Naive thymus-derived CD4-positive, alpha-beta T cell (primary cell): ENCODE measurements at regions of chr3 and their contacts with region 1.

Region 1: DNA sequence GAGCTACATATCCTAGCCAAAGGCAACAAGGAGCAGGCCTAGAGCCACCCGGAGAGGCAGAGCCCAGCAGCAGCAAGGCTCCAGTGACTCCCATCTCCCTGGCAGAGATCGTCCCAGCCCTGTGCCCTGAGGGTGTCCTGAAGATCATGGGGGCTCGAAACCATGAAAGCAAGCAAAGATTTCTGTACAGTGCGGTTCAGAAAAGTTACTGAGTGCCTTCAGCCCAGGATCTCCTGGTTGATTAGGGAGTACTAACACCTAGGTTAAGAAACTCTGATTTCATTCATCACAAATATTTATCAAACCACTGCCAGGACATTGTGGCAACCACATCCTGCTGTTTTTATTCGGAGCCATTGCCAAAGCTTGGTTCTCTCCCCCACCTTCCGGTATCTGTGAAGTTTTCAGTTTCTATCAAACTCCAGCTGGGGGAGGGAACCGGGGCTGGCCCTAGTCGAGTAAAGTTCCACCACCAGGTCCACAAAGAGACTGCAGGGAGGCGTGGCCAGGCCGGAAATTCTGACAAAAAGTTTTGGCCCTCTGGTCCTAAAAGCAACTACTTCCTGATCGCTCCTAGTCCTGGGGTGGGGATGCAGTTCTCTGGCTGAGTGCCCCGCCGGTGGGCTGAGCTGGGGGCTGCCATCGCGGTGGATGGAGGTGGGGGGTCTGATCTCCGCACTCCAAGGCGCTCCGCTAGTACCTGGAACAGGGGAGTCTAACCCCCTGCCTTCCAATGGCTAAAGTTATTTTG is 1.2 kb downstream of the RAB43 start:
- DNase-seq: peak; percentile 63 to 96 (median 93)
- ATAC-seq: peak; percentile 72
- H3K4me3 ChIP-seq: peak overlapping the region; percentile 95
- H3K4me3 Mint-ChIP-seq: peak overlapping the region; percentile 86 to 99 (median 98)
- H3K27ac ChIP-seq: peak overlapping the region; percentile 83
- H3K27ac Mint-ChIP-seq: peak overlapping the region; percentile 91 to 100 (median 97)
- H3K4me1 ChIP-seq: peaks cover 32 to 33% of the 10 kb centered on the region in 2 donors
- H3K4me1 Mint-ChIP-seq: peaks cover 26 to 58% (median 42%) of the 10 kb centered on the region in 7 donors
- H3K27me3 ChIP-seq: no peaks in the 10 kb centered on the region
- H3K27me3 Mint-ChIP-seq: no peaks in the 10 kb centered on the region

Region 2: DNA sequence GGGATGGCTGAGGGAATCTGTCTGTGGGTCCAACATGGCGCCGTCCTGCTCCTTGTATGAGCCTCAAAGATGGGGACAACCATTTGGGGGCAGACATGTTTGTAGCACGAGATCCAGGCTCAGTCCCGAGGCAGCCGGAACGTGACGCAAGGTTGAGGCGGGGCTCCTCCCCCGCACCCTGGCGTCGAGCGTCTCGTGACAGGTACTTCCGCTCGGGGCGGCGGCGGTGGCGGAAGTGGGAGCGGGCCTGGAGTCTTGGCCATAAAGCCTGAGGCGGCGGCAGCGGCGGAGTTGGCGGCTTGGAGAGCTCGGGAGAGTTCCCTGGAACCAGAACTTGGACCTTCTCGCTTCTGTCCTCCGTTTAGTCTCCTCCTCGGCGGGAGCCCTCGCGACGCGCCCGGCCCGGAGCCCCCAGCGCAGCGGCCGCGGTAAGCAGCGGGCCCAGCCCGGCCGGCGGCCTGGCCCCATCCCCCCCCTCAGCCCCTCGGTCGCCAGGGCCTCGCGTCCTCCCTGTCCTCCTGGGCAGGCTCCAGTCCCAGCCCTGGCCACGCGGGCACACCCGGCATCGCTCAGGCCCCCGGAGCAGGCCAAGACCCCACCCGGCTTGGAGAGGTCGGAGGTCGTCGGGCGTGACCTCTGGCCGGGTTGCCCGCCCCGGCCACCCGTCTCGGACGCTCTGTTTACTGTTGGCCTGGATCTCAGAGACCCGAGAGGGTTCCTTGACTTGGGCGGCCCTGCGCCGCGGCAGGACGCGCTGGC is 394.3 kb before region 1 on chr3 and contains the start of gene RAB7A:
- CTCF ChIA-PET with region 1: no interaction called
- POLR2A ChIA-PET with region 1: no interaction called
- intact Hi-C with region 1: loop called in 1 of 2 experiments (anchors 10 kb)
- DNase-seq: peak; percentile 92 to 97 (median 97)
- ATAC-seq: peak; percentile 98
- H3K4me3 ChIP-seq: peak within 1 kb of the TSS; percentile 57
- H3K4me3 Mint-ChIP-seq: peak within 1 kb of the TSS; percentile 89 to 98 (median 96)
- H3K27ac ChIP-seq: peak within 1 kb of the TSS; percentile 100
- H3K27ac Mint-ChIP-seq: peak within 1 kb of the TSS; percentile 92 to 98 (median 95)
- H3K4me1 ChIP-seq: peaks cover 32 to 38% of the 10 kb centered on the region in 2 donors
- H3K4me1 Mint-ChIP-seq: peaks cover 49 to 64% (median 60%) of the 10 kb centered on the region in 7 donors
- H3K27me3 ChIP-seq: no peaks in the 10 kb centered on the region
- H3K27me3 Mint-ChIP-seq: peaks cover 0 to 3% (median 0%) of the 10 kb centered on the region in 5 donors
- total RNA-seq, gene RAB7A: 124 to 249 (median 172) TPM

Region 3: GRCh38 chr3:128993461-128994173 is 126.8 kb before region 1 on chr3 and contains the start of gene CFAP92:
- CTCF ChIA-PET with region 1: no interaction called
- POLR2A ChIA-PET with region 1: interaction called, 24 read pairs
- intact Hi-C with region 1: loop called in 1 of 2 experiments (anchors 1 kb)
- DNase-seq: peak; percentile 84 to 90 (median 89)
- ATAC-seq: peak; percentile 99
- H3K4me3 ChIP-seq: peak within 1 kb of the TSS; percentile 57
- H3K4me3 Mint-ChIP-seq: peak within 1 kb of the TSS; percentile 71 to 87 (median 82)
- H3K27ac ChIP-seq: peak within 1 kb of the TSS; percentile 61
- H3K27ac Mint-ChIP-seq: peak within 1 kb of the TSS; percentile 56 to 91 (median 73)
- H3K4me1 ChIP-seq: peaks cover 6 to 28% of the 10 kb centered on the region in 2 donors
- H3K4me1 Mint-ChIP-seq: peaks cover 15 to 45% (median 34%) of the 10 kb centered on the region in 7 donors
- H3K27me3 ChIP-seq: no peaks in the 10 kb centered on the region
- H3K27me3 Mint-ChIP-seq: peaks cover 0 to 3% (median 0%) of the 10 kb centered on the region in 5 donors
- total RNA-seq, gene CFAP92: 0.10 to 1.4 (median 0.46) TPM

Region 4: GRCh38 chr3:129068291-129068886 is 52.0 kb before region 1 on chr3:
- CTCF ChIA-PET with region 1: interaction called, 3 read pairs
- POLR2A ChIA-PET with region 1: interaction called, 42 read pairs
- intact Hi-C with region 1: loop called (anchors 1 to 2 kb)
- DNase-seq: no peak
- ATAC-seq: peak; percentile 32
- H3K4me3 ChIP-seq: peak overlapping the region; percentile 30
- H3K4me3 Mint-ChIP-seq: peak overlapping the region; percentile 60 to 85 (median 76)
- H3K27ac ChIP-seq: peak overlapping the region; percentile 50
- H3K27ac Mint-ChIP-seq: peak overlapping the region in 3 of 9 donors; percentile 19 to 75 (median 64)
- H3K4me1 ChIP-seq: no peaks in the 10 kb centered on the region
- H3K4me1 Mint-ChIP-seq: peaks cover 2 to 28% (median 15%) of the 10 kb centered on the region in 7 donors
- H3K27me3 ChIP-seq: no peaks in the 10 kb centered on the region
- H3K27me3 Mint-ChIP-seq: peaks cover 0 to 5% (median 0%) of the 10 kb centered on the region in 5 donors

Region 5: GRCh38 chr3:129132097-129132866 is 11.9 kb after region 1 on chr3:
- CTCF ChIA-PET with region 1: interaction called, 3 read pairs
- POLR2A ChIA-PET with region 1: interaction called, 89 read pairs
- intact Hi-C with region 1: loop called in 1 of 2 experiments (anchors 2 kb)
- DNase-seq: no peak
- ATAC-seq: peak; percentile 38
- H3K4me3 ChIP-seq: no peak overlapping the region
- H3K4me3 Mint-ChIP-seq: peak overlapping the region in 5 of 10 donors; percentile 7 to 50 (median 34)
- H3K27ac ChIP-seq: peak overlapping the region; percentile 3
- H3K27ac Mint-ChIP-seq: peak overlapping the region; percentile 10 to 89 (median 79)
- H3K4me1 ChIP-seq: peaks cover 0 to 7% of the 10 kb centered on the region in 2 donors
- H3K4me1 Mint-ChIP-seq: peaks cover 3 to 32% (median 17%) of the 10 kb centered on the region in 7 donors
- H3K27me3 ChIP-seq: no peaks in the 10 kb centered on the region
- H3K27me3 Mint-ChIP-seq: no peaks in the 10 kb centered on the region

Region 6: GRCh38 chr3:129278439-129278970 is 158.1 kb after region 1 on chr3 and contains the start of gene HMCES:
- CTCF ChIA-PET with region 1: interaction called, 3 read pairs
- POLR2A ChIA-PET with region 1: interaction called, 7 read pairs
- intact Hi-C with region 1: loop called (anchors 1 kb)
- DNase-seq: peak; percentile 92 to 98 (median 95)
- ATAC-seq: peak; percentile 98
- H3K4me3 ChIP-seq: peak within 1 kb of the TSS; percentile 99
- H3K4me3 Mint-ChIP-seq: peak within 1 kb of the TSS; percentile 95 to 99 (median 98)
- H3K27ac ChIP-seq: peak within 1 kb of the TSS; percentile 99
- H3K27ac Mint-ChIP-seq: peak within 1 kb of the TSS; percentile 89 to 100 (median 98)
- H3K4me1 ChIP-seq: peaks cover 14 to 29% of the 10 kb centered on the region in 2 donors
- H3K4me1 Mint-ChIP-seq: peaks cover 21 to 50% (median 37%) of the 10 kb centered on the region in 7 donors
- H3K27me3 ChIP-seq: no peaks in the 10 kb centered on the region
- H3K27me3 Mint-ChIP-seq: no peaks in the 10 kb centered on the region
- total RNA-seq, gene HMCES: 45.7 to 56.4 (median 52.5) TPM

Region 7: GRCh38 chr3:129323651-129324294 is 203.3 kb after region 1 on chr3:
- CTCF ChIA-PET with region 1: no interaction called
- POLR2A ChIA-PET with region 1: no interaction called
- intact Hi-C with region 1: no loop called
- DNase-seq: no peak
- ATAC-seq: no peak
- H3K4me3 ChIP-seq: no peak overlapping the region
- H3K4me3 Mint-ChIP-seq: no peak overlapping the region
- H3K27ac ChIP-seq: no peak overlapping the region
- H3K27ac Mint-ChIP-seq: no peak overlapping the region
- H3K4me1 ChIP-seq: no peaks in the 10 kb centered on the region
- H3K4me1 Mint-ChIP-seq: peaks cover 0 to 2% (median 0%) of the 10 kb centered on the region in 7 donors
- H3K27me3 ChIP-seq: no peaks in the 10 kb centered on the region
- H3K27me3 Mint-ChIP-seq: no peaks in the 10 kb centered on the region